MCF 10A (cell line): ENCODE measurements at regions of chr18 and their contacts with region 1.

Region 1: GRCh38 chr18:35949903-35950627 is 22.4 kb upstream of the RMP24 start:
- DNase-seq: peak; percentile 66
- H3K4me3 Mint-ChIP-seq: peak overlapping the region; percentile 81
- H3K27ac Mint-ChIP-seq: peak overlapping the region; percentile 35
- H3K4me1 Mint-ChIP-seq: peaks cover 10% of the 10 kb centered on the region
- H3K27me3 Mint-ChIP-seq: peaks cover 10% of the 10 kb centered on the region
- CTCF ChIP-seq: peak; percentile 85

Region 2: DNA sequence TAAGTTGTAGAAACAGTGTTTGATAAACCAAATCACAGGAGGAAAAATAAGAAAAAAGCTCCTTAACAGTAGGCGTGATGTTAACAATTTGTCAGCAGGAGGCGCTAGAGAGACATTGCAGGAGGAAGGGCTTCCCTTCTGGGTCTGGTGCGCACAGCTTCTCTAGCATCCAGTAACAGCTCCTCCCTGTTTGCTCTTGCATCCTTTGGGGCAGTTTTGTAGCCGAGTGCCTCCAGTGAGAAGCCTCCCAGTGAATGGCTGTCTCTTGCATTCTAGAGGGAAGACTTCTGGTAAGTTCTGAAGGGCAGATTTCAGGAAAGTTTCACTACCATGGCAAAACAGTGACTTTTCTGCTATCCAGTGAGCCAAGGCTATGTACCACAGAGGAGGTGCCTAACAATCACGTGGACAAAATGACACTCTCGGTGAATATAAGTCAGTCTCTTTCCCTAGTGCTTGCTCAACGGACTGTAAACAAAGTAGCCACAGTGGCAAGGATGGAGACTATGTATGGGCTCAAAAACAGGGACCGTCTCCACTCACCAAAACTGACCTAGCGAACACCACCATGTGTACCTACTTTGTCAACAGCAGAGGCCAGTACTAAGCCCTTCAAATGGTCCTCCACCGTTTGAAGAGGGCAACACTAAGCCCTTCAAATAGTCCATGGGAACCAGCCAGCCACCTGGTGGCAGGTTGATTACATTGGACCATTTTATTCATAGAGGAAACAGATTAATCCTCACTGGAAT is 563.3 kb before region 1 on chr18:
- CTCF ChIA-PET with region 1: no interaction called
- POLR2A ChIA-PET with region 1: no interaction called
- intact Hi-C with region 1: loop called (anchors 2 kb)
- DNase-seq: peak; percentile 84
- H3K4me3 Mint-ChIP-seq: no peak overlapping the region
- H3K27ac Mint-ChIP-seq: no peak overlapping the region
- H3K4me1 Mint-ChIP-seq: peaks cover 9% of the 10 kb centered on the region
- H3K27me3 Mint-ChIP-seq: no peaks in the 10 kb centered on the region
- CTCF ChIP-seq: peak; percentile 86

Region 3: DNA sequence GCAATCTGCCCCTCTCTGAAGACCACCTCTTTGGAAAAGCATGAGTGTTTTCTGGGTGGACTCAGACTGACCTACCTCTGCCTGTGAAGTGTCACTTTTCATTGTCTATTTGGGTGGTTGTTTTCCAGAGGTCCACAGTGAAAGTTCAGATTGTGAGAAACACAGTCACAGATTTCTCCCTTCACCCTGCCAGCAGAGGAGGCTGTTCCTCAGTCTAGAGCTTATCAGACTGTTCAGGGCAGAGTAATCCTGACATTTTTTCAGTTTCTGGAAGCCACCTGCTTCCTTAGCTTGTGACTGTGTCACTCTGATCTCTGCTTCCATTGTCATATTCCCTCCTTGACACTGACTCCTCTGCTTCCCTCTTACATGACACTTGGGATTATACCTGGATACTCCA is 33.0 kb before region 1 on chr18:
- CTCF ChIA-PET with region 1: interaction called, 6 read pairs
- POLR2A ChIA-PET with region 1: no interaction called
- intact Hi-C with region 1: loop called (anchors 1 kb)
- DNase-seq: peak; percentile 18
- H3K4me3 Mint-ChIP-seq: no peak overlapping the region
- H3K27ac Mint-ChIP-seq: no peak overlapping the region
- H3K4me1 Mint-ChIP-seq: no peaks in the 10 kb centered on the region
- H3K27me3 Mint-ChIP-seq: no peaks in the 10 kb centered on the region
- CTCF ChIP-seq: no peak

Region 4: GRCh38 chr18:35939138-35939537 is 10.9 kb before region 1 on chr18:
- CTCF ChIA-PET with region 1: interaction called, 25 read pairs
- POLR2A ChIA-PET with region 1: interaction called, 4 read pairs
- intact Hi-C with region 1: no loop called
- DNase-seq: no peak
- H3K4me3 Mint-ChIP-seq: no peak overlapping the region
- H3K27ac Mint-ChIP-seq: no peak overlapping the region
- H3K4me1 Mint-ChIP-seq: peaks cover 17% of the 10 kb centered on the region
- H3K27me3 Mint-ChIP-seq: no peaks in the 10 kb centered on the region
- CTCF ChIP-seq: no peak

Region 5: GRCh38 chr18:35983818-35984217 is 33.8 kb after region 1 on chr18:
- CTCF ChIA-PET with region 1: no interaction called
- POLR2A ChIA-PET with region 1: no interaction called
- intact Hi-C with region 1: no loop called
- DNase-seq: no peak
- H3K4me3 Mint-ChIP-seq: no peak overlapping the region
- H3K27ac Mint-ChIP-seq: no peak overlapping the region
- H3K4me1 Mint-ChIP-seq: no peaks in the 10 kb centered on the region
- H3K27me3 Mint-ChIP-seq: no peaks in the 10 kb centered on the region
- CTCF ChIP-seq: no peak

Region 6: DNA sequence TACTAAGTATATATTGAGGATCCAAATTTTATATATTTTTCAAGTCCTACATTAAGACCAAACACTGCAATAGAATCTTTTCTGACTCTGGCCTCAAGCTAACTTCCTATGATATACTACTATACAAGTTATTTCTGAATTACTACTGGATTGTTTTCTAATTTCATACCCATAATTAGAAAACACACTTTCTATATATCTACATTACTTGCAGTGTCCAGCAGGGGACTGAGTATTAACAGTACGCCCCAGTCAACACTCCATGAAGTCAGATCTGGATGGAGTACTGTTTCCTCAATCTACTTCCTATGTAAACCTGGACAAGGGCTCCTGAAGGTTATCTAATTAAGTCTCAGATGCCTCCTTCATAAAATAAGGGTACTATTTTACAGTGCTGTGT is 48.9 kb after region 1 on chr18:
- CTCF ChIA-PET with region 1: no interaction called
- POLR2A ChIA-PET with region 1: no interaction called
- intact Hi-C with region 1: no loop called
- DNase-seq: peak; percentile 22
- H3K4me3 Mint-ChIP-seq: no peak overlapping the region
- H3K27ac Mint-ChIP-seq: no peak overlapping the region
- H3K4me1 Mint-ChIP-seq: no peaks in the 10 kb centered on the region
- H3K27me3 Mint-ChIP-seq: no peaks in the 10 kb centered on the region
- CTCF ChIP-seq: peak; percentile 7